Activated T-helper 2 cell treated with anti-CD3 and anti-CD28 coated beads, Interferon-gamma antibody, Interleukin-2, Interleukin-4, amounts not matched to agents 10 μg/mL and 5 μg/mL and 100 μg/mL, durations not matched to agents 14 hours and 24 hours and 36 hours (primary cell): ENCODE measurements at regions of chr2 and their contacts with region 1.

Region 1: DNA sequence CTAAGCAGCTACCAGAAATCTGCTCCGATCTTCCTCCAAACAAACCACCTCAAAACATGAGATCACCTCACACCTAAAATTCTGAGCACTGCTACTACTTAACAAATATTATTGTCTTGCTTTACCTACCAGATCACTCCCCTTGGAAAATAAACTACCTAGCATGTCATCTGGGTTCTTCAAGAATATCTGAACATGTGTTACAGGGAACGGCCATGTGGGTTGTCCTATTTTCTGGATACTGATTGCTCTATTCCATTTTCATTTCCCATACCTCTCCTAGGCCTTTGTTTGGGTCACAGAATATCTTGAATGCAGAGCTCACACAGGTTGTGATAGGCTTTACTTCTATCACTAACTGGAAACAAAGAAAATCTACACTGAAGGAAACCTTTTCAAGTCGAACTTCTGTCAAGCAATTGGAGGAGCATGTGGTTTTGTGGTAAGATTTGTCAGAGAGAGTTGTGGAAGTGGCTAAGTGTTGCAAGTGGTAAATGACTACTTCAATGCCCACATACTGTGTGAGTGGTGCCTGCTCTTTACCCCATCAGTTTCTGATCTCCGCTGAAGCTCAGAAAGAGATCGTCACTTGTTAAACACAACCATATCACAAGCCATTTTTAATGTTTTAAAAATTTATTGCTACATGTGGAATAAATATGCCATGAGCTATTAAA is 739.1 kb upstream of the ZEB2 start:
- DNase-seq: peak; percentile 10
- H3K4me3 Mint-ChIP-seq: no peak overlapping the region
- H3K27ac Mint-ChIP-seq: no peak overlapping the region
- H3K4me1 Mint-ChIP-seq: peaks cover 12% of the 10 kb centered on the region
- H3K27me3 Mint-ChIP-seq: peaks cover 52% of the 10 kb centered on the region

Region 2: DNA sequence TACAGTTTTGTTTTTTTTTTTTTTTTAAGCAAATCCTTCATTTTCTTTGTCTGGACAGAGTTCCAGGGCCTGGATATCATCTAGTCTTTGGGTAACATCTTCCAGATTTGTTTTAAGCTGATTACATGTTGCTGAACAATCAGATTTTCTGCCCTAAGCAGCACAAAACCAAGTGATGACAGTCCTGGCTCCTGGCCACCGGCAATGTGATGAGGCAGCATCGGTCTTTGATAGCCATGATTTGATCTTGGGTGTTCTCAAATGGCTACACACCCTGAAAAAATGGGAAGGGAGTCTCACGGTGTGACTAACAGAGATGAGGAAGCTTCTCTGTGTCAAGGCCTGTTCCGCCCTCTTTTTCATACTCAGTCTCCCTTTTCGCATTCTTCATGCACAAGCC is 30.5 kb before region 1 on chr2:
- intact Hi-C with region 1: no loop called
- DNase-seq: no peak
- H3K4me3 Mint-ChIP-seq: no peak overlapping the region
- H3K27ac Mint-ChIP-seq: no peak overlapping the region
- H3K4me1 Mint-ChIP-seq: no peaks in the 10 kb centered on the region
- H3K27me3 Mint-ChIP-seq: no peaks in the 10 kb centered on the region

Region 3: GRCh38 chr2:145329976-145330375 is 70.9 kb after region 1 on chr2:
- intact Hi-C with region 1: no loop called
- DNase-seq: no peak
- H3K4me3 Mint-ChIP-seq: no peak overlapping the region
- H3K27ac Mint-ChIP-seq: no peak overlapping the region
- H3K4me1 Mint-ChIP-seq: peaks cover 2% of the 10 kb centered on the region
- H3K27me3 Mint-ChIP-seq: peaks cover 29% of the 10 kb centered on the region

Region 4: GRCh38 chr2:145530653-145531052 is 271.6 kb after region 1 on chr2:
- intact Hi-C with region 1: no loop called
- DNase-seq: no peak
- H3K4me3 Mint-ChIP-seq: no peak overlapping the region
- H3K27ac Mint-ChIP-seq: no peak overlapping the region
- H3K4me1 Mint-ChIP-seq: no peaks in the 10 kb centered on the region
- H3K27me3 Mint-ChIP-seq: no peaks in the 10 kb centered on the region

Region 5: DNA sequence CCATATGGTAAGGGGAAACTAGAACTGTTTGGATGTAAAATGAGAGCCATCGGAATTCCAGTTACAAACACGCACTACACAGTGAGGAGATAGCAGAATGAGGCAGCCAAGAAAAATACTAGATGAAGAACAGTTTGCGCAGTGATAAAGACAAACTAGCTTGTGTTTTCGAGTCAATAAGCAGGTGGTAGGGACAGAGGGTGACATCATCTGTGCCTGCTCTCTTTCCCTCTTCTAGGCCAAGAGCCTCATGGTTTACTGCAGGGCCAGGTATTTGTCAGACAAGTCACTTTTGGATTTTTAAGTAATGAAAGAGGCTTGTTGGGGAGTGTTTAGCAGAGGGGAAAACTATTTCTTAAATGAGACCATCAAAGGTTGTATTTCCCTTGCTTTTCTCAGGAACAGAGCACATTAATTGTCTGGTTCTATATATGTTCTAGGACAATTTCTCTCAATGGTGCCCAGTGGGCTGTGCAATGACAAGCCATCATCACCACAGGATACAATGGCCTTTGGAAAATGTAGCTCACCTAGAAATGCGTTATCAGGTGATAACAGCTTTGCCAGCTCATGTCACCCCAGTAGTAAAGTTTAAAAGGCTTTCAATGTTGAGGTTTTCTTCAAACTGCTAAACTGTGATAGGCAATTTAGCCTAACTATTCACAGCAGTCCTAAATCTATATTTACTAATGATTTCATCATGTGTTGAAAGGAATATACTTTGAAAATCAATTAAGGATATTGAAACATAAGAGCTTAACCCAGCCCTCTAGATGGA is 471.1 kb after region 1 on chr2:
- intact Hi-C with region 1: no loop called
- DNase-seq: no peak
- H3K4me3 Mint-ChIP-seq: no peak overlapping the region
- H3K27ac Mint-ChIP-seq: no peak overlapping the region
- H3K4me1 Mint-ChIP-seq: no peaks in the 10 kb centered on the region
- H3K27me3 Mint-ChIP-seq: no peaks in the 10 kb centered on the region

Region 6: GRCh38 chr2:145752091-145752806 is 493.2 kb after region 1 on chr2:
- intact Hi-C with region 1: loop called (anchors 2 kb)
- DNase-seq: no peak
- H3K4me3 Mint-ChIP-seq: no peak overlapping the region
- H3K27ac Mint-ChIP-seq: no peak overlapping the region
- H3K4me1 Mint-ChIP-seq: peaks cover 23% of the 10 kb centered on the region
- H3K27me3 Mint-ChIP-seq: peaks cover 12% of the 10 kb centered on the region